Activated CD8-positive, alpha-beta T cell treated with anti-CD3 and anti-CD28 coated beads, Interleukin-2, amount 10 ng/mL, durations not matched to agents 7 days and 5 days (primary cell): ENCODE measurements at regions of chr5 and their contacts with region 1.

Region 1: DNA sequence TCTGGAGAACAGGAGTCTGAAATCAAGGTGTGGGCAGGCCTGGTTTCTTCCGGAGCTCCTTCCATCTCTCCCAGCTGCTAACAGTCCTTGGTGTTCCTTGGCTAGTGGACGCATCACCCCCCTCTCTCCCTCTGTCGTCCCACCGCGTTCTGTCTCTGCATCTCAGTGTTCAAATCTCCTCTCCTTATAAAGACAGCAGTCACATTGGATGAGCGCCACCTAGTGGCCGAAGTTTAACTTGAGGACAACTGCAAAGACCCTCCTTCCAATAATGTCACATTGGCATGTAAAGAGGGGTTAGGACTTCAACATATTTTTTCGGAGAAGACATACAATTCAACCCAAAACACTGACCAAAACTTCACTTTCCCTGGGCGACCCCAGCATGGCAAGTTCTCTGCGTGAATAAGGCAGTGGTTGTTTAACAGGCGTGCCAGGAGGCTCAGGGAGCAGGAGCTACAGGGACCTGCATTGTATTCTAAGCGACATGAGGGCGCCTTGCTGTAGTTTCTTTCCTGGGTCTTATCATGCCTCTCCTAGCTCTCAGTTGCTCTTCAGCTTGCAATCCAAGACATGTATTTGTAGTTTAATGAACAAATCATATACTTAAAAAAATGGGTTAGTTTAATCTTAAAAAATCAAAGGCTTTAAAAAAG is 27.9 kb upstream of the BASP1 start:
- DNase-seq: peak; percentile 69
- ATAC-seq: peak; percentile 63
- H3K4me3 Mint-ChIP-seq: no peak overlapping the region
- H3K27ac Mint-ChIP-seq: no peak overlapping the region
- H3K4me1 Mint-ChIP-seq: no peaks in the 10 kb centered on the region
- H3K27me3 Mint-ChIP-seq: no peaks in the 10 kb centered on the region

Region 2: DNA sequence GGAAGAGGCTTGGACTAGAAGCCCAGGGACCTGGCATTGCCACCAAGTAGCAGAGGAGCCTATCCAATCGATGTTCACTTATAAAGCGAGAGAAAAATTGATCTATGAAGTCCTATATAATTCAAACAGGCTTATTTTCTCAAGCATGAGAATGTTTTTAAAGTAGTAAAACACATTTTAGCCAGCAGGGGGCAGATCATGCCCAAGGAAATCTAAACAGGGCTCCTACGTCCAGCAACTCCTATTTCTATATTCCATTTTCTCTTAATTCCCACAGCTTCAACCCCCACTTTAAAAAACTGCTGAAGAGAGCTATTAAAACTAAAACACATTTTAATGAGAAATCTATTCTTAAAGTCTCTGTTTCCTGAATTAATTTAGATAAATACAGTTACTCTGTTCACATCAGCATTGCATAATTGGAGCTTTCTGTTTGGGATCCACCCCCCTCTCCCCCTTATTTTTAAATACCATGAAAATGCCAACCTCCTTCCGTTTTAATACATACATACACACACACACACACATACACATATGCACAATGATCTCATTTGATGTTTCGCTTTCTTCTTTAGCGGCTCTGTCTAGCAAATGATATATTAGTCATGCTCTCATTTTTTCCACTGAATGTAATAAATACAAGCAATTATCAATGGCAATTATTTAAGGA is 398.3 kb before region 1 on chr5:
- CTCF ChIA-PET with region 1: interaction called, 19 read pairs
- POLR2A ChIA-PET with region 1: no interaction called
- DNase-seq: peak; percentile 42
- ATAC-seq: no peak
- H3K4me3 Mint-ChIP-seq: no peak overlapping the region
- H3K27ac Mint-ChIP-seq: no peak overlapping the region
- H3K4me1 Mint-ChIP-seq: no peaks in the 10 kb centered on the region
- H3K27me3 Mint-ChIP-seq: peaks cover 2% of the 10 kb centered on the region

Region 3: DNA sequence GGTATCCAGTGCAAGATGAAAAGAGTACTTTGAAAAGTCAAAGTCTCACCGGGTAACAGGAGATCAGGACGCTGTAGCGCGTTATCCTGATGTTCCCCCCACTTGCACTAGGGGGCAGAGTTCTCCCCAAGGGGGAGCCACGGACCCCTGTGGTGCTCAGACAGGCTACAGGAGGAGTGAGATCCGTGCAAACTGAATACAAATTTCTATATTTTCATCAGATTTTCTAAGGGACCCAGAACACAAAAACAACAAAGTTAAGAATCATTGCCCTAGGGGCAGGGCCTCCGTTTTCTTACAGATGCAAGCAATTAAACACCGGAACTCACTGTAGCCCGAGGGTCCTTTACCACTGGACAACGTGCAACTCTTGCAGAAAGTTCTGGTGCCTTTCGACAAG is 255.4 kb before region 1 on chr5:
- CTCF ChIA-PET with region 1: interaction called, 11 read pairs
- POLR2A ChIA-PET with region 1: no interaction called
- DNase-seq: peak; percentile 48
- ATAC-seq: no peak
- H3K4me3 Mint-ChIP-seq: no peak overlapping the region
- H3K27ac Mint-ChIP-seq: no peak overlapping the region
- H3K4me1 Mint-ChIP-seq: peaks cover 10% of the 10 kb centered on the region
- H3K27me3 Mint-ChIP-seq: peaks cover 51% of the 10 kb centered on the region

Region 4: GRCh38 chr5:16975950-16976624 is 213.4 kb before region 1 on chr5:
- CTCF ChIA-PET with region 1: no interaction called
- POLR2A ChIA-PET with region 1: no interaction called
- DNase-seq: no peak
- ATAC-seq: no peak
- H3K4me3 Mint-ChIP-seq: no peak overlapping the region
- H3K27ac Mint-ChIP-seq: no peak overlapping the region
- H3K4me1 Mint-ChIP-seq: no peaks in the 10 kb centered on the region
- H3K27me3 Mint-ChIP-seq: no peaks in the 10 kb centered on the region

Region 5: GRCh38 chr5:17204133-17204489 is 14.6 kb after region 1 on chr5:
- CTCF ChIA-PET with region 1: interaction called, 16 read pairs
- POLR2A ChIA-PET with region 1: no interaction called
- DNase-seq: no peak
- ATAC-seq: no peak
- H3K4me3 Mint-ChIP-seq: no peak overlapping the region
- H3K27ac Mint-ChIP-seq: no peak overlapping the region
- H3K4me1 Mint-ChIP-seq: no peaks in the 10 kb centered on the region
- H3K27me3 Mint-ChIP-seq: no peaks in the 10 kb centered on the region